GM12878 (cell line): ENCODE measurements at regions of chrX and their contacts with region 1.

Region 1: GRCh38 chrX:13051529-13052172 is 7.2 kb upstream of the FAM9C start:
- DNase-seq: peak; percentile 71
- ATAC-seq: peak; percentile 71
- H3K4me3 ChIP-seq: no peak overlapping the region
- H3K27ac ChIP-seq: peak overlapping the region; percentile 69
- H3K4me1 ChIP-seq: peaks cover 48% of the 10 kb centered on the region
- H3K27me3 ChIP-seq: no peaks in the 10 kb centered on the region
- CTCF ChIP-seq: no peak
- EP300 ChIP-seq: peak; percentile 85 to 95; a peak in 3 of 4 replicates
- POLR2A ChIP-seq: no peak
- RAD21 ChIP-seq: no peak

Region 2: GRCh38 chrX:12955882-12956703 is 95.6 kb before region 1 on chrX:
- CTCF ChIA-PET with region 1: interaction called, 12 read pairs
- POLR2A ChIA-PET with region 1: interaction called, 3 read pairs
- RAD21 ChIA-PET with region 1: interaction called, 33 read pairs
- SMC1A ChIA-PET with region 1: interaction called, 68 read pairs
- in situ Hi-C with region 1: no loop called
- intact Hi-C with region 1: no loop called
- DNase-seq: peak; percentile 77
- ATAC-seq: peak; percentile 59
- H3K4me3 ChIP-seq: peak overlapping the region; percentile 32
- H3K27ac ChIP-seq: peak overlapping the region; percentile 99
- H3K4me1 ChIP-seq: peaks cover 42% of the 10 kb centered on the region
- H3K27me3 ChIP-seq: no peaks in the 10 kb centered on the region
- CTCF ChIP-seq: no peak
- EP300 ChIP-seq: peak; percentile 48 to 62; a peak in 2 of 4 replicates
- POLR2A ChIP-seq: peak; percentile 30
- RAD21 ChIP-seq: no peak

Region 3: GRCh38 chrX:12984629-12985319 is 66.9 kb before region 1 on chrX:
- CTCF ChIA-PET with region 1: interaction called, 6 read pairs
- POLR2A ChIA-PET with region 1: interaction called, 5 read pairs
- RAD21 ChIA-PET with region 1: interaction called, 18 read pairs
- SMC1A ChIA-PET with region 1: interaction called, 66 read pairs
- in situ Hi-C with region 1: no loop called
- intact Hi-C with region 1: loop called (anchors 2 kb)
- DNase-seq: no peak
- ATAC-seq: peak; percentile 74
- H3K4me3 ChIP-seq: peak overlapping the region; percentile 26; the same call in 1 of the 2 replicates
- H3K27ac ChIP-seq: peak overlapping the region; percentile 98
- H3K4me1 ChIP-seq: peaks cover 68% of the 10 kb centered on the region
- H3K27me3 ChIP-seq: no peaks in the 10 kb centered on the region
- CTCF ChIP-seq: no peak
- EP300 ChIP-seq: peak; percentile 68 to 87; a peak in 3 of 4 replicates
- POLR2A ChIP-seq: no peak
- RAD21 ChIP-seq: no peak; the same call in 1 of the 2 replicates

Region 4: DNA sequence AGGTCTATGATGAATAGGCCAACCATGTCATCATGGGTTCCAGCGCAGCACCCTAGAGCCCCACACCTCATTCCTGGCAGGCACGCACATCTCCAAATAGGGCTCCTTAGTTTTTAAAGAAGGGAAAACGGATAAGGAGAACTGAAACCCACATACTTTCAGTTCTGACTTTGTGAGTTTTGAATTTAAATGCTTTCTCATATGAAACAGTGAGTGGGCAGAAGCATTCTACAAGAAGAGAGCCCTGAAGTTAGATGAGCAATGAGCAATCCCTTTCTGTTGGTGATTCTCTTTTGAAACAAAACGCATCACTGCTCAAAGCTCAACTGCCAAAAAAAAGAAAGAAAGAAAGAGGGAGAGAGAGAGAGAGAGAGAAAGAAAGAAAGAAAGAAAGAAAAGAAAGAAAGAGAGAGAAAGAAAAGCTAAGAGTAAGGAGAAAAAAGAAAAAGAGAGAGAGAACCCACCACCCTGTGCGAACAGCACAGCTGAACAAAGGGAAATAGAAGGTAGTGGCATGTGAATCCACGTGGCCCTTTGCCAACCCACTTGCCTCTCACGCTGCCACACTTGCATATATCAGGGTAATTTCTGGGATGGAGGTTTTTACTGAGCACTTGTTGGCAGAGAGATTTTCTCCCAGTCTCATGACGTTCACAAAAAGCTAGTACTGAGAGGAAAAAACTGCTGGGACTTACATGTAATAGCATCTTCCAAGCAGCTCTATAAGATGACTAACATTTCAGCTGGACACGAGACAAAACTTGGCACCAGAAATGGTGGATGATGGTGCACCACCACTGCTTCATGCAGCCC is 45.8 kb before region 1 on chrX:
- CTCF ChIA-PET with region 1: interaction called, 7 read pairs
- POLR2A ChIA-PET with region 1: interaction called, 12 read pairs
- RAD21 ChIA-PET with region 1: interaction called, 84 read pairs
- SMC1A ChIA-PET with region 1: interaction called, 115 read pairs
- in situ Hi-C with region 1: no loop called
- intact Hi-C with region 1: loop called (anchors 2 kb)
- DNase-seq: peak; percentile 89
- ATAC-seq: peak; percentile 55
- H3K4me3 ChIP-seq: peak overlapping the region; percentile 28; the same call in 1 of the 2 replicates
- H3K27ac ChIP-seq: peak overlapping the region; percentile 91
- H3K4me1 ChIP-seq: peaks cover 83% of the 10 kb centered on the region
- H3K27me3 ChIP-seq: no peaks in the 10 kb centered on the region
- CTCF ChIP-seq: no peak
- EP300 ChIP-seq: peak; percentile 96
- POLR2A ChIP-seq: no peak
- RAD21 ChIP-seq: no peak; the same call in 1 of the 2 replicates

Region 5: DNA sequence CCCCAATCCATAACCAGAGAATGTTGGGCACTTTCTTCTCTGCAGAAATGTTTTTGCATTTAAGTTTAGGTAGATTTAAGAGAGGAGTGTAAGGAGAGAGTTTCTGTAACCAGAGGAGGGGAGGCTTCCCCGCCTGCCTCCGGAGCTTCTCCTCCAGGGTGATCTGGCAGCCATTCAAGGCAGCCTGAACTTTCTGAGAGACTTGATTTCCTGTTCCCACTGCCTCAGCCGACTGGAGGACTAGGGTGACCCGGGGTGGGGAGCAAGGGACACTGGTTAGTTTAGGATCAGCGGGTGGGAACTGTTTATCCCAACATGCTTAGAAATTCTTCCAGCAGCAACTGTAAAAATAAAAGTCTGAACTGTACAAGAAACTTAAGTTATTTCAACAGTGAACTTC is 22.3 kb before region 1 on chrX:
- CTCF ChIA-PET with region 1: interaction called, 5 read pairs
- POLR2A ChIA-PET with region 1: interaction called, 18 read pairs
- RAD21 ChIA-PET with region 1: interaction called, 77 read pairs
- SMC1A ChIA-PET with region 1: interaction called, 166 read pairs
- in situ Hi-C with region 1: no loop called
- intact Hi-C with region 1: loop called (anchors 1 kb)
- DNase-seq: no peak
- ATAC-seq: peak; percentile 21
- H3K4me3 ChIP-seq: no peak overlapping the region
- H3K27ac ChIP-seq: peak overlapping the region; percentile 83
- H3K4me1 ChIP-seq: peaks cover 45% of the 10 kb centered on the region
- H3K27me3 ChIP-seq: no peaks in the 10 kb centered on the region
- CTCF ChIP-seq: no peak
- EP300 ChIP-seq: no peak
- POLR2A ChIP-seq: no peak
- RAD21 ChIP-seq: no peak

Region 6: GRCh38 chrX:13078739-13079444 is 27.2 kb after region 1 on chrX:
- CTCF ChIA-PET with region 1: interaction called, 9 read pairs
- POLR2A ChIA-PET with region 1: interaction called, 39 read pairs
- RAD21 ChIA-PET with region 1: interaction called, 100 read pairs
- SMC1A ChIA-PET with region 1: interaction called, 214 read pairs
- in situ Hi-C with region 1: no loop called
- intact Hi-C with region 1: loop called (anchors 1 kb)
- DNase-seq: no peak
- ATAC-seq: no peak
- H3K4me3 ChIP-seq: no peak overlapping the region
- H3K27ac ChIP-seq: peak overlapping the region; percentile 81
- H3K4me1 ChIP-seq: peaks cover 94% of the 10 kb centered on the region
- H3K27me3 ChIP-seq: no peaks in the 10 kb centered on the region
- CTCF ChIP-seq: no peak
- EP300 ChIP-seq: no peak
- POLR2A ChIP-seq: no peak
- RAD21 ChIP-seq: no peak

Region 7: GRCh38 chrX:13734278-13735172 is 682.9 kb after region 1 on chrX and contains the starts of genes OFD1 and TRAPPC2:
- CTCF ChIA-PET with region 1: no interaction called
- POLR2A ChIA-PET with region 1: no interaction called
- RAD21 ChIA-PET with region 1: no interaction called
- SMC1A ChIA-PET with region 1: no interaction called
- in situ Hi-C with region 1: no loop called
- intact Hi-C with region 1: no loop called
- DNase-seq: peak; percentile 96
- ATAC-seq: peak; percentile 92
- H3K4me3 ChIP-seq: peak within 1 kb of the TSS; percentile 78
- H3K27ac ChIP-seq: peak within 1 kb of the TSS; percentile 87
- H3K4me1 ChIP-seq: no peaks in the 10 kb centered on the region
- H3K27me3 ChIP-seq: no peaks in the 10 kb centered on the region
- CTCF ChIP-seq: no peak
- EP300 ChIP-seq: 0 out of 4 replicates have a peak, but pooled peaks of 1 of the 2 experiments have one; percentile 24
- POLR2A ChIP-seq: peak; percentile 87
- RAD21 ChIP-seq: no peak
- polyA plus RNA-seq, gene OFD1: 43.0 to 64.5 TPM
- polyA plus RNA-seq, gene TRAPPC2: 18.3 to 27.5 TPM